Thyroid gland (tissue), 4 donors: ENCODE measurements at regions of chr5 and their contacts with region 1.

Region 1: DNA sequence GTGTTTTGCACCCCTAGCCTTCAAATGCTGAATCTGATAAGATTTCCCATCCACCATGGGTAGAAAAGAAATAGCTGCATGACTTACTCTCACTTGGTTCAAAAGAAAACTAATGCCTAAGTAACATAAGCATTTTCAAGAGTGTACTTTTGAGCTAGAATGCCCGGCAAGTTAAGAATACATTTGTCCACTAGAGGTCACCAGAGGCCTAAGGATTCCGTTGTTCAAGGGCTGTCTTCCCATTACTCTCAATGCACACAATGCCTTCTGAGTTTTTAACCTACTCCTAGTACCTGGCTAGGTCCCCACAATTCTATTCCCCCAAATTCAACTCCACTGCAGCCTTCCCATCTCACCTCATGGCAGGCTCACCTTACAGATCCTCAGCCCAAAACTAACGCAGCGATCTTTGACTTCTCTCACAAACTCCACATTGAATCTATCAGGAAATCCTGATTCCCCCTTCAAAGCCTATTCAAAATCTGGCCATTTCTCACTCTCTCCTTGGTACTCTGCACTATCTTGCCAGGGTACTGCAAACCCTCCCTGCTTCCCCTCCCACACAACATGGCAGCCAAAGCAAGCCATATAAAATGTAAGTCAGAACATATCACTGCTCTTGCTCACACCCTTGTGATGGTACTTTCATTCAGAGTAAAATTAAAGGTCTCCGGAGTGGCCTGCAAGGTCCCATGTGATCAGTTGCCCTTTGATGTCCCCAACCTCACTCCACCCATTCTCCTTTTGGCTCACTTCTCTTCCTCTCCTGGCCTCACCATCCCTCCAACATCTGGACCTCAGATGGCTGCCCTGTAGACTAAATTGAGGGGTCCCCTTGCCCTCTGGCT is 13.4 kb downstream of the OXCT1 start:
- DNase-seq: peak; percentile 35 to 44
- H3K4me3 ChIP-seq: no peak overlapping the region
- H3K27ac ChIP-seq: no peak overlapping the region
- H3K4me1 ChIP-seq: no peaks in the 10 kb centered on the region
- H3K27me3 ChIP-seq: no peaks in the 10 kb centered on the region
- CTCF ChIP-seq: peak; percentile 28 to 87 (median 67)
- POLR2A ChIP-seq: no peak

Region 2: DNA sequence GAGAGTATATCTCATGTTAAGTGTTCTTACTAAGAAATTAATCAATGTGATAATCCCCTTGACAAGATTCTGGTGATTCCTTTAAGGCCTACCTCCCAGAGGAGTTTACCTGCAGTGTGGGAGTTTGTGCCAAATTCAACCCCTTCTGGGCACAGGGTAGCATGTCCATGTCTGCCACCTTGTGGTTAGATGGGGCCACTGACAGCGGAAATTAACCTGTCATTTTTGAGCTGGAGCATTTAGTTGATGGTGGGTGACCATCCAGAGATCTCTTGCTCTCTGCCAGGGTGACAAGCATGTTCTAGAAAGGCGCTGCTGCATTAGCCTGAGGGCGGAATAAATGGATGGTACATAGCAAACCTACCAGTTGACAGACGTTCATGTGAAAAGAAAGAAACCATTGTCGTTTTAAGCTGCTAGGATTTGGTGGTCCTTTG is 200.4 kb after region 1 on chr5:
- intact Hi-C with region 1: loop called (anchors 10 kb)
- DNase-seq: peak; percentile 35 to 39
- H3K4me3 ChIP-seq: no peak overlapping the region
- H3K27ac ChIP-seq: no peak overlapping the region
- H3K4me1 ChIP-seq: no peaks in the 10 kb centered on the region
- H3K27me3 ChIP-seq: no peaks in the 10 kb centered on the region
- CTCF ChIP-seq: peak in 4 of 6 experiments; percentile 36 to 70 (median 58)
- POLR2A ChIP-seq: no peak